Activated T-helper 2 cell treated with anti-CD3 and anti-CD28 coated beads, Interferon-gamma antibody, Interleukin-2, Interleukin-4, amounts not matched to agents 10 μg/mL and 5 μg/mL and 100 μg/mL, durations not matched to agents 14 hours and 24 hours and 36 hours (primary cell): ENCODE measurements at regions of chr2 and their contacts with region 1.

Region 1: DNA sequence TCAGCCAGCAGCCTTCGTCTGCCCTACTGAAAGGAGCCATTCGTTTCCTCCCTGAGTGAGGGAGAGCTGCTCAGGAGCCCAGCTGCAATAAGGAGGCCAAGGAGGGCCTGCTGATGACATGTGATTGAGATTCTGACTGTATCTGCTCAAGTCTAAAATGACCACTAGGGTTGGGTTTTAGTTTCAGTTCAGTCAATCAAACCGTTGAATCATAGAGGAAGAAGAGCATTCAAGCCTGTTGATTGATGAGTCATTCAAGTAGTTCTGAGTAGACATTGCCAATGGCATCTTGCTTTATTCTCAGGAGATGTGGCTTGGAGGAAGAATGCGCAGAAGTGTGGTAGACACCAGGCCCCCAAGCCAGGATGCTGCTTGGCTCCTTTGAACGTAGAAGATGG is 19.9 kb upstream of the BCL2L11 start:
- DNase-seq: no peak
- H3K4me3 Mint-ChIP-seq: no peak overlapping the region
- H3K27ac Mint-ChIP-seq: peak overlapping the region; percentile 74
- H3K4me1 Mint-ChIP-seq: peaks cover 14% of the 10 kb centered on the region
- H3K27me3 Mint-ChIP-seq: peaks cover 56% of the 10 kb centered on the region

Region 2: DNA sequence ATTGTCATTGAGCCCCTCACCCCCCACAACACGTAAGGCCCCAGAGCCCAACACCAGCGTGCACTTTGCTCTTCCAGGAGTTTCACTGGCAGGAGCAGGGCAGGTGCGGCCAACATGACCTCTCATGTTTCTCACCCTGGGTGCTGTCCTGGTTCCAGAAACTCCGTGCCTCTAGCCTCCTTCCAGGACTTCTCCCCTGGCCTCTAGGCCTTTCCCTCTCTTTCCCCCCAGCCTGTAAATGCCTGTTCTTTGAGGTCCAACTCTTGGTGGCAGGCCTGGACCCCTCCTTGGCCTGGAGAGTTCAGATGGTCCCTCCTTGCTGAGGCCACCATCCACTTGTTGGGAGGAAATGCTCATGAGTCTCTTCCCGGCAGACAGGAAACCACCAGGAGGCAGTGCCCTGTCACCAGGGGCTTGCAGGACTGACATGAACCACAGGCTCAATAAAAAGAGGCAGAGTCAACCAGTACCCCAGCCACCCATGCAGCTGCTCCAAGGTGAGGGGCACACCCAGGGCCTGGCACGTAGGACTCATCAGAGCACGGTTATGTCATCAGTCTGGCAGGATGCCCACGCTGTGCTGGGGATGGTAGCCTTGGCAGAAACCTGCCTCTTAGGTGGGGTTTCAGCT is 986.7 kb before region 1 on chr2:
- intact Hi-C with region 1: no loop called
- DNase-seq: no peak
- H3K4me3 Mint-ChIP-seq: peak overlapping the region; percentile 32
- H3K27ac Mint-ChIP-seq: no peak overlapping the region
- H3K4me1 Mint-ChIP-seq: peaks cover 19% of the 10 kb centered on the region
- H3K27me3 Mint-ChIP-seq: peaks cover 58% of the 10 kb centered on the region

Region 3: DNA sequence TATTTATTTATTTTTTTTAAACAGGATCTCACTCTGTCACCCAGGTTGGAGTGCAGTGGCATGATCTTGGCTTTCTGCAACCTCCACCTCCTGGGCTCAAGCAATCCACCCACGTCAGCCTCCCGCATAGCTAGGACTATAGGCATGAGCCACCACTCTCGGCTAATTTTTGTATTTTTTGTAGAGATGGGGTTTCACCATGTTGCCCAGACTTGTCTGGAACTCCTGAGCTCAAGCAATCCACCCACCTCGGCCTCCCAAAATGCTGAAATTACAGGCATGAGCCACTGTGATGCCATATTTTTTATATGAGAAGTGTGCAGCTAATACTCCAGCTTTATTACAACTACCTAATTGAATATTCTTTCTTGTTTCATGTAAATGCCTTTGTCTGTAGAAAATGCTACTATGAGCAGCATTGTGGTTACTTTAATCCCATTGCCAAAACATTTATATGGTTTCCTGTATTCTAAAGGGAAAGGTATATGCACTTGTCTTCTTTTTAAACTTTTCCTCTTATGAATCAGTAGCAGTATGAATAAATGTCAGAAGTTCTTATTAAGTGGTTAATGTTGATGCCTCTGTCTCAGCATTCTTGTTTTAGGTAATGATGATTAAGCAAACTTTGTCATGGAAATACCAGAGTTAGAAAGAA is 10.5 kb after region 1 on chr2:
- intact Hi-C with region 1: loop called (anchors 1 kb)
- DNase-seq: no peak
- H3K4me3 Mint-ChIP-seq: no peak overlapping the region
- H3K27ac Mint-ChIP-seq: no peak overlapping the region
- H3K4me1 Mint-ChIP-seq: peaks cover 21% of the 10 kb centered on the region
- H3K27me3 Mint-ChIP-seq: peaks cover 51% of the 10 kb centered on the region

Region 4: DNA sequence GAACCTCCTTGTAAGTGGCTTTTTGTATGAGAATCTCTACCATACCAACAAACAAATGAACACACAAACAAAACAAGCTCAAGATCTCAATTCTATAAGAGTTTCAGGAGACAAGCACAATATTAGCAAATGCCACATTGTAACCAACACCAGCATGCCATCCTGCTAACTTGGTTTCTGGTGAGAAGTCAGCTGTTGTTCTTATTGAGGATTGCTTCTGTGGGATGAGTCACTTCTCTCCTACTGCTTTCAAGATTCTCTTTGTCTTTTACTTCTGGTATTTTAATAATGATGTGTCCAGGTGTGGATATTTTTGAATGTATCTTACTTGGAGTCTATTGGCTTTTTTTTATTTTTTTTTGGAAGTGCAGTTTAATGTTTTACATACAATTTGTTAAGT is 151.7 kb after region 1 on chr2:
- intact Hi-C with region 1: no loop called
- DNase-seq: no peak
- H3K4me3 Mint-ChIP-seq: no peak overlapping the region
- H3K27ac Mint-ChIP-seq: no peak overlapping the region
- H3K4me1 Mint-ChIP-seq: peaks cover 7% of the 10 kb centered on the region
- H3K27me3 Mint-ChIP-seq: no peaks in the 10 kb centered on the region